PC-3 (cell line): ENCODE measurements at regions of chr14 and their contacts with region 1.

Region 1: DNA sequence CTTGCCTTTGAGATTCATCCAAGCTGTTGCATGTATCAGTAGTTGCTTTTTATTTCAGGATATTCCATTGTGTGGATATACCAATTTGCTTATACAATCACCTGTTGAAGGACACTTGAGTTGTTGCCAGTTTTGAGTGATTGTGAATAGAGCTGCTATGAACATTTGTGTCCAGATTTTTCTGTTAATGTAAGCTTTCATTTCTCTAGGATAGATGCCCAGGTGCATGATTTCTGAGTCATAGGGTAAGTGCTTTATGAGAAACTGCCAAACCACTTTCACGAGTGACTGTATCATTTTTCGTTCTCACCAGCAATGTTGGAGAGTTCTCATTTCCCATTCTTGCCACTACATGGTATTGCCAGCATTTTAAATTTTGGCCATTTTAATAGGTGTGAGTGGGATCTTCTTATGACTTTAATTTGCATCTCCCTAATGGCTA is 434.6 kb upstream of the RGS6 start:
- DNase-seq: peak; percentile 56
- ATAC-seq: peak; percentile 74
- H3K4me3 ChIP-seq: no peak overlapping the region
- H3K27ac ChIP-seq: no peak overlapping the region
- H3K4me1 ChIP-seq: peaks cover 10% of the 10 kb centered on the region
- H3K27me3 ChIP-seq: no peaks in the 10 kb centered on the region
- CTCF ChIP-seq: no peak

Region 2: DNA sequence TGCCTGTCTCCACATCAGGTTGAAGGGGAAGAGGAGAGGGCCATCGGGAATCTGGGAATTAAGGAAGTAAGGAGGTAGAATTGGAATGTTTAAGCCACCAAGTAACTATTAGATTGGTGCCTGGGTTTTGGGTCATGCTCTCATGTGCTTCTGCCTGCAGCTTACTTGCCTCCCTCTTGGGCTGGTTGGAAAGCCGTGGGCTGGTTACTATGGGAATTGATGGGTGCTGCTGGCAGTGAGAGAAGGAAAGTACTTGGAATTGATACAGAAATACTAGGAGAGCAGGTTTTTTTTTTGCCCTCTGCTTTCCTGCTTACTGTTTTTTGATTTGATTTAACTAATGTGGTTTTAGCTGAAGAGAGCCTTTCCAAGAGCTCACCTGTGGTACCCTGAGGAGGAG is 59.0 kb before region 1 on chr14:
- CTCF ChIA-PET with region 1: no interaction called
- POLR2A ChIA-PET with region 1: interaction called, 12 read pairs
- intact Hi-C with region 1: no loop called
- DNase-seq: peak; percentile 9
- ATAC-seq: no peak
- H3K4me3 ChIP-seq: no peak overlapping the region
- H3K27ac ChIP-seq: peak overlapping the region; percentile 81
- H3K4me1 ChIP-seq: peaks cover 33% of the 10 kb centered on the region
- H3K27me3 ChIP-seq: no peaks in the 10 kb centered on the region
- CTCF ChIP-seq: no peak

Region 3: GRCh38 chr14:71452539-71452938 is 45.1 kb before region 1 on chr14:
- CTCF ChIA-PET with region 1: no interaction called
- POLR2A ChIA-PET with region 1: no interaction called
- intact Hi-C with region 1: no loop called
- DNase-seq: peak; percentile 12
- ATAC-seq: no peak
- H3K4me3 ChIP-seq: no peak overlapping the region
- H3K27ac ChIP-seq: no peak overlapping the region
- H3K4me1 ChIP-seq: peaks cover 66% of the 10 kb centered on the region
- H3K27me3 ChIP-seq: no peaks in the 10 kb centered on the region
- CTCF ChIP-seq: no peak

Region 4: GRCh38 chr14:71508901-71509300 is 11.2 kb after region 1 on chr14:
- CTCF ChIA-PET with region 1: no interaction called
- POLR2A ChIA-PET with region 1: no interaction called
- intact Hi-C with region 1: no loop called
- DNase-seq: no peak
- ATAC-seq: no peak
- H3K4me3 ChIP-seq: no peak overlapping the region
- H3K27ac ChIP-seq: no peak overlapping the region
- H3K4me1 ChIP-seq: no peaks in the 10 kb centered on the region
- H3K27me3 ChIP-seq: no peaks in the 10 kb centered on the region
- CTCF ChIP-seq: no peak

Region 5: DNA sequence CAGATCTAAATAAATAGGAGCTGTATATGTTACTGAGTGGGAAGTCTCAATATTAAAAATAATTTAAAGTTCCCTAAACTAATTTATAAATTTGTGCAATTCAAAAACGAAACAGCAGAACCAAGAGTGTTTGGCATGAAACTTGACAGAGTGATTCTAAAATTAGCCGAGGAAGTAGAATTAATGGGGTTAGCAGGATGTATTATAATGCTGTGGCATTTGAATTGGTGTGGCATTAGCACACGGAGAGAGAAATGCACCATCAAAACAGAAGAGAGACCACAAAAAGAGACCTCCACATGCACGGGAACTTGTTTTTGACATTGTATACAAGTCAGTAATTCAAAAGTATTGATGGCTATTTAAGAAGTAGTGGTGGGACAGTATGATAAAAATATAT is 68.6 kb after region 1 on chr14:
- CTCF ChIA-PET with region 1: no interaction called
- POLR2A ChIA-PET with region 1: no interaction called
- intact Hi-C with region 1: no loop called
- DNase-seq: no peak
- ATAC-seq: no peak
- H3K4me3 ChIP-seq: no peak overlapping the region
- H3K27ac ChIP-seq: no peak overlapping the region
- H3K4me1 ChIP-seq: no peaks in the 10 kb centered on the region
- H3K27me3 ChIP-seq: no peaks in the 10 kb centered on the region
- CTCF ChIP-seq: no peak

Region 6: GRCh38 chr14:71739273-71739937 is 241.7 kb after region 1 on chr14:
- CTCF ChIA-PET with region 1: no interaction called
- POLR2A ChIA-PET with region 1: no interaction called
- intact Hi-C with region 1: no loop called
- DNase-seq: peak; percentile 77
- ATAC-seq: peak; percentile 77
- H3K4me3 ChIP-seq: no peak overlapping the region
- H3K27ac ChIP-seq: peak overlapping the region; percentile 30
- H3K4me1 ChIP-seq: peaks cover 11% of the 10 kb centered on the region
- H3K27me3 ChIP-seq: no peaks in the 10 kb centered on the region
- CTCF ChIP-seq: peak; percentile 45